ENCODE measurements at regions of chr7 and their contacts with region 1.

Region 1: GRCh38 chr7:139777948-139778841 is at the start of gene HIPK2:
- DNase-seq: peak; percentile 55
- H3K4me3 Mint-ChIP-seq: peak within 1 kb of the TSS; percentile 95
- H3K27ac Mint-ChIP-seq: peak within 1 kb of the TSS; percentile 94
- H3K4me1 Mint-ChIP-seq: peaks cover 44% of the 10 kb centered on the region
- H3K27me3 Mint-ChIP-seq: peaks cover 19% of the 10 kb centered on the region
- total RNA-seq, gene HIPK2: 27.6 and 27.7 TPM in 2 replicates

Region 2: DNA sequence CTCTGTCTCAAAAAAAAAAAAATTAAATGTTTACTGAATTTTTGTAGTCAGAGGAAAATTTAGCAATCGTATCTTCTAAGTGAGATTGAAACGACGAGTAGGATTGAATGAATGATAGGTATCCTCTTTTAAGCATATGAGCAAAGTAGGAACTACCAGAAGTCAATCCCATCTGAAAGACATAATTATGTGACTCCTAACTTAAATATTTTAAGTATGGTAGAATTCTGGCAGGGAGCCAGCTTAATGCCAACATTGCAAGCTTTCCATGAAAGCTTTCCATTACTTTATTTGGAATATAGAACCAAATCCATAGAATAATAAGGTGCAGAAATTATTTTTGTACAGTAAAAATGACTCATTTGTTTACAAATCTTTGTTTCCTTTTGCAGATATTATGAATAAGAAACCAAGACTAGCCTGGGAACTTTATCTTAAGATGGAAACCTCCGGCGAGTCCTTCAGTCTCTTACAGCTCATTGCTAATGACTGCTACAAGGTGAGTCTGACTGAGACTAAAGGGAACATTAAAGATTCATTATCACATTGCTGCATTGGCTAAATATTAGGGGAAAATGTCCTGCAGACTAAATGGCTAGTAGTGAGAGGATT is 597.4 kb before region 1 on chr7:
- intact Hi-C with region 1: no loop called
- DNase-seq: no peak
- H3K4me3 Mint-ChIP-seq: no peak overlapping the region
- H3K27ac Mint-ChIP-seq: no peak overlapping the region
- H3K4me1 Mint-ChIP-seq: no peaks in the 10 kb centered on the region
- H3K27me3 Mint-ChIP-seq: no peaks in the 10 kb centered on the region

Region 3: GRCh38 chr7:139680676-139681462 is 97.3 kb before region 1 on chr7:
- intact Hi-C with region 1: loop called (anchors 1 kb)
- DNase-seq: peak; percentile 67
- H3K4me3 Mint-ChIP-seq: peak overlapping the region; percentile 27
- H3K27ac Mint-ChIP-seq: peak overlapping the region; percentile 92
- H3K4me1 Mint-ChIP-seq: peaks cover 61% of the 10 kb centered on the region
- H3K27me3 Mint-ChIP-seq: no peaks in the 10 kb centered on the region

Region 4: DNA sequence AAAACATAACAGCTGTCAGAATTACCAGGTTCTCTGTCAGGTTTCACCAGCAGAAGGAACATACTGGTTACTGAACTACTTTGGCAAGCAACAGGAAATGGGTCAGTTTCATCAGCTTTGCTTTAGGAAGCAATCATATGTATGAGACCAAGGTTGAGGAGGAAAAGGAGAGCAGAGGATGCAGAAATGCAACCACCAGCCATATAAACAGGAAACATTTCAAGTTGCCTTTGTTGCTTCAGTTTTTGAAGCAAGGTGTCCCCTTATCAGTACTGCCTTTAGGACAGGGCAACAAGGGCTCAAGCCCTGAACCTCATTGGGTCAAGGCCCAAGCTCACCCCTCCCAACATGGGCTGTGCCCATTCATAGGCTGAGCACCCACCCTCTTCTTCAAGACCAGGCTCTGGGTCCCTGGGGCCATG is 10.6 kb before region 1 on chr7:
- intact Hi-C with region 1: loop called (anchors 1 kb)
- DNase-seq: peak; percentile 14
- H3K4me3 Mint-ChIP-seq: peak overlapping the region; percentile 66
- H3K27ac Mint-ChIP-seq: peak overlapping the region; percentile 78
- H3K4me1 Mint-ChIP-seq: peaks cover 70% of the 10 kb centered on the region
- H3K27me3 Mint-ChIP-seq: no peaks in the 10 kb centered on the region

Region 5: DNA sequence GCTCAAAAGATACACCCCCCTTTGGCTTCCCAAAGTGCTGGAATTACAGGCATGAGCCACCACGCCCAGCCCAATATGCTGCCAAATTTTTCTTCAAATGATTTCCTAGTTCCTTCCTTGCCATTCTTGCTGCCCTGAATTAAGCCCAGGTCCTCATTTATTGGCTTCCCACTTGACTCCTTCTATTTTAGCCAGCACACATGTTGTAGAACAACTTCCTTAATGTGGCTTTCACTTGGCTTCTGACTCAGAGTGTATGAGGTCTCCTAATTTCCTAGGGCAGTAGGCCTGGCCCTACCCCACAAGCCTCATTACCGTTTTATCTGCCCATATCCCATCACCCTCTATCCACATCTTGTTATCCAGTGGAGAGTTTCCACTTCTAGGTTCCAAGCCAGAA is 21.4 kb after region 1 on chr7:
- intact Hi-C with region 1: no loop called
- DNase-seq: no peak
- H3K4me3 Mint-ChIP-seq: no peak overlapping the region
- H3K27ac Mint-ChIP-seq: no peak overlapping the region
- H3K4me1 Mint-ChIP-seq: peaks cover 13% of the 10 kb centered on the region
- H3K27me3 Mint-ChIP-seq: no peaks in the 10 kb centered on the region

Region 6: GRCh38 chr7:139825666-139826290 is 47.6 kb after region 1 on chr7:
- intact Hi-C with region 1: no loop called
- DNase-seq: no peak
- H3K4me3 Mint-ChIP-seq: no peak overlapping the region
- H3K27ac Mint-ChIP-seq: no peak overlapping the region
- H3K4me1 Mint-ChIP-seq: peaks cover 20% of the 10 kb centered on the region
- H3K27me3 Mint-ChIP-seq: peaks cover 10% of the 10 kb centered on the region

Region 7: GRCh38 chr7:139853506-139854123 is 75.4 kb after region 1 on chr7:
- intact Hi-C with region 1: no loop called
- DNase-seq: no peak
- H3K4me3 Mint-ChIP-seq: no peak overlapping the region
- H3K27ac Mint-ChIP-seq: no peak overlapping the region
- H3K4me1 Mint-ChIP-seq: peaks cover 6% of the 10 kb centered on the region
- H3K27me3 Mint-ChIP-seq: no peaks in the 10 kb centered on the region

Region 8: GRCh38 chr7:140003913-140004382 is 225.8 kb after region 1 on chr7:
- intact Hi-C with region 1: loop called (anchors 2 kb)
- DNase-seq: peak; percentile 19
- H3K4me3 Mint-ChIP-seq: no peak overlapping the region
- H3K27ac Mint-ChIP-seq: no peak overlapping the region
- H3K4me1 Mint-ChIP-seq: no peaks in the 10 kb centered on the region
- H3K27me3 Mint-ChIP-seq: no peaks in the 10 kb centered on the region

Measured in activated T-helper 2 cell treated with anti-CD3 and anti-CD28 coated beads, Interferon-gamma antibody, Interleukin-2, Interleukin-4, amounts not matched to agents 10 μg/mL and 5 μg/mL and 100 μg/mL, durations not matched to agents 14 hours and 24 hours and 36 hours (primary cell).